Right cardiac atrium (tissue), 5 donors: ENCODE measurements at regions of chr11 and their contacts with region 1.

Region 1: GRCh38 chr11:36564376-36565030 is 3.3 kb upstream of the RAG1 start:
- DNase-seq: peak in 2 of 3 donors; percentile 39 to 55
- ATAC-seq: peak; percentile 76 to 82
- H3K4me3 ChIP-seq: peak overlapping the region; percentile 51
- H3K27ac ChIP-seq: no peak overlapping the region
- H3K4me1 ChIP-seq: peaks cover 2% of the 10 kb centered on the region
- H3K27me3 ChIP-seq: no peaks in the 10 kb centered on the region

Region 2: DNA sequence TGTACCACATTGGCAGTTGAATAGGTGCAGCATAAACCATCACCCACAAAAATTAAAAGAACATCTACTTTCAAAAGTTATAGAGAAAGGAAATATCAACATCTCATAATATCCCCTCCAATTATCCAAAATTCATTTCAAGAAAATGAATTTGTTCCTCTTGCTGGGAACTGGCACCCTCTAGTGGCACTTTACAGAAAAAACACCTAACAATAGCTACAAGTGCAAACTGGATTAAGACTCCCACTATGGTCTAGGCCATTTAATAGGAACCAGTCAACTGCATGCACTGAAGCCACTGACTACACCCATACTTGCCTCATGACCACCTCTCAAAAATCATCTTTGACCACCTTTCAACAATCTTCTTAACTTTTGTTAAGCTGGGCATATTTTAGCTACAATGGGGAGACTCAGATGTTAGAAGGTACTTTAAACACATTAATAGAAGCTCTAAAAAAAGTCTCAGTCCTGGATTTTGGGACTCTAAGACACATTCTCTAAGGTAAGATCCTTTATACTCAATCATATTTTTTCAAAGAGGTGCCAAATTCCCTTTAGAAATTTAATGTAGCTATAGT is 71.7 kb before region 1 on chr11:
- intact Hi-C with region 1: no loop called
- DNase-seq: no peak
- ATAC-seq: peak in 1 of 2 donors; percentile 48
- H3K4me3 ChIP-seq: no peak overlapping the region
- H3K27ac ChIP-seq: no peak overlapping the region
- H3K4me1 ChIP-seq: no peaks in the 10 kb centered on the region
- H3K27me3 ChIP-seq: no peaks in the 10 kb centered on the region

Region 3: DNA sequence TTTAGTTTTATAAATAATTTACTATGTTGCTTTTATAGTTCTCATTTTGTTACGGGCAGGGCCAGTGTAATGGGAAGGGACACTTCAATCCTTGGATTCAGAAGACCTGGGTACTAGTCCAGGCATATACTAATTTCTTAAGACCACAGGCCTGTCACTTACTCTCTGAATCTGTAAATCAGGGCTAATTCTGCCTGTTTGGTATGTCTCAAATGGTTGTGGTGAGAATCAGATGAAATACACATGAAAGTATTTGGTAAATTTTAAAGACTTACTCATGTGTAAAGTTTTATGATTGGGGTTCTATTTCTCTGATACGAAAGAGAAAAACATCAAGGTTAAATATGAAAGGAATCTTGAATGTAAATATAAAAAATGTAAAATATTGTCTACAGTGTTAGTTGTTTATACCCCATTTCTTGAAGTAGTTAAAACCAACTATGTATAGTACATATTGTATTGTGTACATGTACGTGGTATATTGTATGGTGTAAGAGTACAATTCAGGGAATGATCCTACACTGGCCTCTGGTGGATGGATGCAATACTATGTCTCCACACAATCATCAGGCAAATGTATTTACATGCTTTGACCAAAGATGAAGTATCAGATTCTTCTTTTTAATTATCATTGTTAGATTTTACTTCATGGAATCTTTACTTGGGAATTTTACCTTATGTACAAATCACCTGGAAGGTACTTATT is 58.1 kb after region 1 on chr11:
- intact Hi-C with region 1: loop called in 1 of 4 experiments (anchors 10 kb)
- DNase-seq: no peak
- ATAC-seq: peak in 1 of 2 donors; percentile 56
- H3K4me3 ChIP-seq: no peak overlapping the region
- H3K27ac ChIP-seq: no peak overlapping the region
- H3K4me1 ChIP-seq: peaks cover 3% of the 10 kb centered on the region
- H3K27me3 ChIP-seq: no peaks in the 10 kb centered on the region

Region 4: DNA sequence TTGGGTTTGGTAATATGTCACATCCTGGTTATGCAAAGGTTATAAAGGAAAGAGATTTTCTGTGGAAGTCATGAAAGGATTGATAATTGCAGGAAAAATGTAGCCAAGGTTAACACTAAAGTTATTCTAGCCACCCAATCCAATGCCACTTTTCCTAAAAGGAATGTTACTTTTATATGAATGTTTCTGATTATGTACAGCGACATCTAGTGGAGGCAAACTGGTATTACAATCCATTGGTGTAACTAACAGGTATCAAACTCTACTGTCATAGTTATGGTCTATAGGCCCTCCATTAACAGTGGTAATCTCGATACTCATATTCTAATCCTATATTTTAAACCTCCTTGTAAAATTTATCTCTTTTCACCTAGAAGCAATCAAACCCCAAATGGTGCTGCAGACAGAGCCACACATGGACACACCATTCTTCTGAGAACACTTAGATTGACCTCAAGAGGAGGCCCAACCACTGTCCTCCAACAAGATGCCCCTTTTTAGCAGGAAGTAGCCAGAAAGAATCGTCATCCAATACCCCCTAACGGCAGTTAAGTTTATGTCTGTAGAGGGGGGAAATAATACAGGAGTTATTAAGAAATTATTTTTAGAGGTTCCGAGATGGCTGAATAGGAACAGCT is 108.4 kb after region 1 on chr11:
- intact Hi-C with region 1: loop called (anchors 5 to 10 kb)
- DNase-seq: no peak
- ATAC-seq: no peak
- H3K4me3 ChIP-seq: no peak overlapping the region
- H3K27ac ChIP-seq: no peak overlapping the region
- H3K4me1 ChIP-seq: no peaks in the 10 kb centered on the region
- H3K27me3 ChIP-seq: no peaks in the 10 kb centered on the region

Region 5: GRCh38 chr11:36746886-36747710 is 182.6 kb after region 1 on chr11:
- intact Hi-C with region 1: loop called in 3 of 4 experiments (anchors 5 kb)
- DNase-seq: peak; percentile 72 to 94 (median 92)
- ATAC-seq: peak; percentile 95 to 96
- H3K4me3 ChIP-seq: no peak overlapping the region
- H3K27ac ChIP-seq: no peak overlapping the region
- H3K4me1 ChIP-seq: no peaks in the 10 kb centered on the region
- H3K27me3 ChIP-seq: no peaks in the 10 kb centered on the region